Heart left ventricle (tissue), 16 donors: ENCODE measurements at regions of chr22 and their contacts with region 1.

Region 1: DNA sequence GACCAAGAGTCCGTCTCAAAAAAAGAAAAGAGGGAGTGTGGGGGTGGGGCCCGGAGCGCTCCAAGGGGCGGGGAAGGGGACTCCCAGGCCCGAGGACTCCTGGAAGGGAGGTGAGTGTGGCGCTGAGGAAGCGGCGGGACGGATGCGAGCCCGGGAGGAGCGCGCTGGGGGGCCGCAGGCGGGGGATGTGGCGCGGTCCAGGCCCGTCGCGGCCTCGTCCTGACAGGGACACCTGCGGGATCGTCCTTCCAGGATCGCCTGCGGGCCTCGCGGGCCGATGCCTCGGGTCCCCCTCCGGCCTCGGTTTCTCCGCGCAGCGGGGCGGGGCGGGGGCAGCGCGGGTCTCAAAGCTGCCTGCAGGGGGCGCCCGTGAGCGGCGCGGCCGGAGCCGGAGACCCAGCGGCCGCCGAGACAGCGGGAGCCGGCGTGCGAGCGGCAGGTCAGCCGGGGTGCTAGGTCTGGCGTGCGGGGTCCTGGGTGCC is 3.8 kb upstream of the ADORA2A start:
- DNase-seq: peak; percentile 62 to 88 (median 73)
- ATAC-seq: peak in 3 of 4 donors; percentile 18 to 80 (median 69)
- H3K4me3 ChIP-seq: peak overlapping the region; percentile 56 to 96 (median 71)
- H3K27ac ChIP-seq: peak overlapping the region in 10 of 12 donors; percentile 36 to 88 (median 70)
- H3K4me1 ChIP-seq: peaks cover 0 to 86% (median 43%) of the 10 kb centered on the region in 12 donors
- H3K27me3 ChIP-seq: no peaks in the 10 kb centered on the region
- CTCF ChIP-seq: peak; percentile 76 to 98 (median 92)
- POLR2A ChIP-seq: no peak

Region 2: DNA sequence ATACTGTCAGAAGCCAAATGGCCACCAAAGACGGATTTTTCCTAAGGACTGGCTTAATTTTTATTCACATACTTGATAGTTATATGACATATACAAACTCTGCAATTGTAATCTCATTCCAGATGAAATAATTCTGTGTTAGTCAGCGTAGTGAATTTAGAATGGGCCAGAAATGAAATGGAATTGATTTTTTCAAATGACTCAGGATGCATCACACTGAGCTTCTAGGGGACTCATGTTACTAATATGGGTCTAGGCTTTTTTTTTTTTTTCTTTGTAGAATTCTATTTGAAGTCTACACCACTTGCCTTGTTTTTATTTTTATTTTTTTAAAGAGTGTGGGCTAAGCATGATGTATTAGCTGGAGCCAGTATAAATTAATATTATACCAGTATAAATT is 90.3 kb before region 1 on chr22:
- intact Hi-C with region 1: loop called in 3 of 10 experiments (anchors 5 kb)
- DNase-seq: no peak
- ATAC-seq: no peak
- H3K4me3 ChIP-seq: no peak overlapping the region
- H3K27ac ChIP-seq: no peak overlapping the region
- H3K4me1 ChIP-seq: peaks cover 0 to 48% (median 0%) of the 10 kb centered on the region in 12 donors
- H3K27me3 ChIP-seq: no peaks in the 10 kb centered on the region
- CTCF ChIP-seq: no peak
- POLR2A ChIP-seq: no peak

Region 3: GRCh38 chr22:24391836-24392217 is 31.7 kb before region 1 on chr22:
- intact Hi-C with region 1: no loop called
- DNase-seq: peak in 1 of 5 donors; percentile 20
- ATAC-seq: peak in 1 of 4 donors; percentile 18
- H3K4me3 ChIP-seq: no peak overlapping the region
- H3K27ac ChIP-seq: peak overlapping the region in 11 of 12 donors; percentile 52 to 80 (median 73)
- H3K4me1 ChIP-seq: peaks cover 10 to 65% (median 49%) of the 10 kb centered on the region in 12 donors
- H3K27me3 ChIP-seq: no peaks in the 10 kb centered on the region
- CTCF ChIP-seq: no peak
- POLR2A ChIP-seq: no peak

Region 4: DNA sequence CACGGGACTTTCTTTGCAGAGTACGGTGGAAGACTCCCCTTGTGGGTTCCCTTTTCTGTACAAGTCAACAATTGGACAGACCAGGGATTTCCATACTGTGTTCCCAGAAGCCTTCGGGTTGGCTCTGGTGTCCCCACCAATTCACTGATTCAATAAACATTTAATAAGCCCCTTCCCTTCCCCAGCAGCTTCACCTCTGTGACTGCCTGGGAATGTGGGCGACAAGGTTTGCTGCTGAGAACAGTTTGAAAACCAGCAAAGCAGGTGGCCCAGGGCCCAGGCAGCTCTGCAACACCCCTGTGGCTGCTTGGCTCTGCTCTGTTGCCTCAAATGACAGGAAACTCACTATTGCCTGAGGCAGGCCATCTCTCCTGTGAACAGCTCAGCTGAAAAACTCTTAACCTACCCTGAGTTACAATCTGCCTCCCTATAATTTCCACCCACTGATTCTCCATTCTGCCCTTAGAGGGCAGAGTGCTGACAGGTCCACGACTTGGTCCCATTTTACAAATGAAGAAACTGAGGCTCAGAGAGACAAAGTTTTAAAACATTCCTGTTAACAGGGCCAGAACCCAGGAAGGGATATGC is 14.3 kb after region 1 on chr22:
- intact Hi-C with region 1: no loop called
- DNase-seq: peak in 1 of 5 donors; percentile 16
- ATAC-seq: no peak
- H3K4me3 ChIP-seq: no peak overlapping the region
- H3K27ac ChIP-seq: no peak overlapping the region
- H3K4me1 ChIP-seq: peaks cover under 1 to 78% (median 47%) of the 10 kb centered on the region in 12 donors
- H3K27me3 ChIP-seq: no peaks in the 10 kb centered on the region
- CTCF ChIP-seq: no peak
- POLR2A ChIP-seq: no peak

Region 5: DNA sequence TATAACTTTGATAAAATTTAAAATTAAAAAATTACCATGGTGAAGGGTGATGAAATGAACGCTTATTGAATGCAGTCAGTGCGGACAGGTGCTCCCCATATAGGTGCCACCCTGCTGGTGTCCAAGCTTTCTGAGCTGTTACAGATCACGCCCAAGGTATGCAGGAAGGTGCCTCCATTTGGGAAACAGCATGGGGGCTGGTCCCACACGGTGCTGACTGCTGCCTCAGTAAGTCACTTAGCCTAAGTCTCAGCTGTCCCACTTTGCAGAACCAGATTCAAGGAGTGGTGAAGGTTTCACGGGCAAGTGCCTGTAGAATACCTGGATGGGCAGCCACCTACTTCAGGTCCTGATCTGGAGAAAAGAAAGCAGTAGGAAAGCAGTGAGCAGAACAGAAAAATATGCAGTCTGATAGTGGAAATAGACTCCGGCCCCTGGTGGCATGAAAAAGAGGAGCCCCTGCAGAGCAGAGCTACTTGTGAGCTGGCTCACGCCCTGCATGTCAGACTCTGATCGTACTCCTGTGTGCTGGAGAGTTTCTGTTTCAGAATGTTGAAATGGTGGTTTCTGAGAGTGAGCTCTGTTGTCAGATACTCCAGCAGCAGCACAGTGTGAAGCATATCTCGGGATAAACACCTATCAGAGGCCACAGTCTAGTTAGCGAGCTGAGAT is 37.0 kb after region 1 on chr22:
- intact Hi-C with region 1: no loop called
- DNase-seq: no peak
- ATAC-seq: no peak
- H3K4me3 ChIP-seq: no peak overlapping the region
- H3K27ac ChIP-seq: peak overlapping the region in 5 of 12 donors; percentile 3 to 45 (median 24)
- H3K4me1 ChIP-seq: peaks cover 0 to 49% (median 35%) of the 10 kb centered on the region in 12 donors
- H3K27me3 ChIP-seq: no peaks in the 10 kb centered on the region
- CTCF ChIP-seq: no peak
- POLR2A ChIP-seq: no peak

Region 6: DNA sequence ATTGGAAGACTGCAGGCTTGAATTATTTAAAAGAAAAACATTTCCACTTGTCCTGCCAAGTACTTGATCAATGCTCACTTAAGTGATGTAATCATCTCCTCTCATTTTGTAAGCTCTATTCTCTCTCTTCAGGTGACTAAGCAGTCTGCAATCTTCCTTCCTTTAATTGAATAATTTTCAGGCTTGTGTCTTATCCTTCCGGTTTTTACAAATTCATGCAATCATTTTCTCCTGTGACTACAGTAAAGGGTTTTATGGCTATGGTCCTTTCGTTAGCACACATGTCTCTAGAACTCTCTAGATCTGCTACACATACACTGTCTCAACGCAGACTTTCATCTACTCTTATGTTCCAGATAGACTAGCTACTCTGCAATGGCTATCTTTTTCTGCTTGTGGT is 59.0 kb after region 1 on chr22:
- intact Hi-C with region 1: loop called in 4 of 10 experiments (anchors 2 to 5 kb)
- DNase-seq: no peak
- ATAC-seq: peak in 2 of 4 donors; percentile 48 to 69
- H3K4me3 ChIP-seq: no peak overlapping the region
- H3K27ac ChIP-seq: no peak overlapping the region
- H3K4me1 ChIP-seq: peaks cover 0 to 37% (median 5%) of the 10 kb centered on the region in 12 donors
- H3K27me3 ChIP-seq: no peaks in the 10 kb centered on the region
- CTCF ChIP-seq: no peak
- POLR2A ChIP-seq: no peak

Region 7: GRCh38 chr22:24503137-24503842 is 79.7 kb after region 1 on chr22:
- intact Hi-C with region 1: loop called in 9 of 10 experiments (anchors 2 to 5 kb)
- DNase-seq: peak; percentile 53 to 78 (median 64)
- ATAC-seq: peak in 3 of 4 donors; percentile 69 to 79 (median 76)
- H3K4me3 ChIP-seq: no peak overlapping the region
- H3K27ac ChIP-seq: no peak overlapping the region
- H3K4me1 ChIP-seq: peaks cover 0 to 37% (median 13%) of the 10 kb centered on the region in 12 donors
- H3K27me3 ChIP-seq: no peaks in the 10 kb centered on the region
- CTCF ChIP-seq: peak; percentile 51 to 73 (median 66)
- POLR2A ChIP-seq: no peak